ENCODE measurements at regions of chr13 and their contacts with region 1.

Region 1: GRCh38 chr13:109275852-109276251 is 510.5 kb downstream of the IRS2 start:
- DNase-seq: peak; percentile 41
- H3K4me3 Mint-ChIP-seq: no peak overlapping the region
- H3K27ac Mint-ChIP-seq: no peak overlapping the region
- H3K4me1 Mint-ChIP-seq: peaks cover 15% of the 10 kb centered on the region
- H3K27me3 Mint-ChIP-seq: no peaks in the 10 kb centered on the region
- CTCF ChIP-seq: no peak

Region 2: GRCh38 chr13:108961542-108962125 is 314.2 kb before region 1 on chr13:
- CTCF ChIA-PET with region 1: interaction called, 3 read pairs
- POLR2A ChIA-PET with region 1: interaction called, 6 read pairs
- intact Hi-C with region 1: loop called (anchors 5 kb)
- DNase-seq: peak; percentile 57
- H3K4me3 Mint-ChIP-seq: no peak overlapping the region
- H3K27ac Mint-ChIP-seq: no peak overlapping the region
- H3K4me1 Mint-ChIP-seq: peaks cover 43% of the 10 kb centered on the region
- H3K27me3 Mint-ChIP-seq: no peaks in the 10 kb centered on the region
- CTCF ChIP-seq: peak; percentile 79

Region 3: GRCh38 chr13:109087916-109088623 is 187.8 kb before region 1 on chr13:
- CTCF ChIA-PET with region 1: no interaction called
- POLR2A ChIA-PET with region 1: no interaction called
- intact Hi-C with region 1: no loop called
- DNase-seq: peak; percentile 17
- H3K4me3 Mint-ChIP-seq: no peak overlapping the region
- H3K27ac Mint-ChIP-seq: no peak overlapping the region
- H3K4me1 Mint-ChIP-seq: no peaks in the 10 kb centered on the region
- H3K27me3 Mint-ChIP-seq: no peaks in the 10 kb centered on the region
- CTCF ChIP-seq: no peak

Region 4: GRCh38 chr13:109156181-109156935 is 119.5 kb before region 1 on chr13:
- CTCF ChIA-PET with region 1: interaction called, 3 read pairs
- POLR2A ChIA-PET with region 1: interaction called, 41 read pairs
- intact Hi-C with region 1: no loop called
- DNase-seq: peak; percentile 82
- H3K4me3 Mint-ChIP-seq: peak overlapping the region; percentile 64
- H3K27ac Mint-ChIP-seq: peak overlapping the region; percentile 95
- H3K4me1 Mint-ChIP-seq: peaks cover 61% of the 10 kb centered on the region
- H3K27me3 Mint-ChIP-seq: no peaks in the 10 kb centered on the region
- CTCF ChIP-seq: no peak

Region 5: GRCh38 chr13:109383670-109384069 is 107.8 kb after region 1 on chr13:
- CTCF ChIA-PET with region 1: no interaction called
- POLR2A ChIA-PET with region 1: interaction called, 6 read pairs
- intact Hi-C with region 1: loop called (anchors 5 kb)
- DNase-seq: peak; percentile 82
- H3K4me3 Mint-ChIP-seq: no peak overlapping the region
- H3K27ac Mint-ChIP-seq: peak overlapping the region; percentile 85
- H3K4me1 Mint-ChIP-seq: peaks cover 26% of the 10 kb centered on the region
- H3K27me3 Mint-ChIP-seq: no peaks in the 10 kb centered on the region
- CTCF ChIP-seq: no peak

Region 6: DNA sequence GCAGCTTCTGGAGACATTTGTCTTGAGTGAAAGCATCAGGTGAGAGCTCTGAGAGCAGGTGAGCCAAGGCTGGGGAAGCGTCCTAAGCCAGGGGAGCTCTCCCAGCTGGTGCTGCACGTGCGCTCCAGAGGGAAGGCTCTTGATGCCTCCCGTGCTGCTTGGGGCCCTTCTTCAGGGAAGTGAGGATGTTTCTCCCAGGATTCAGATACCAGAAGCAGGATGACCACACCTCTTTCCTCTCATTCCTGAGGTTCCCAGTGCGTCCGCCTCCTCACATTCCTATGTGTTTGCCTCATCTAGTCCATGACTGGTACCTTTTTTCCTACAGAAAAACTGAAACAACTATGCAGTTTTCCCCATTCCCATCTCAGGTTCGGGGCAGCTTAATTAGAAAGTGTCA is 741.5 kb after region 1 on chr13:
- CTCF ChIA-PET with region 1: no interaction called
- POLR2A ChIA-PET with region 1: no interaction called
- intact Hi-C with region 1: loop called (anchors 10 kb)
- DNase-seq: peak; percentile 93
- H3K4me3 Mint-ChIP-seq: peak overlapping the region; percentile 30
- H3K27ac Mint-ChIP-seq: peak overlapping the region; percentile 92
- H3K4me1 Mint-ChIP-seq: peaks cover 53% of the 10 kb centered on the region
- H3K27me3 Mint-ChIP-seq: no peaks in the 10 kb centered on the region
- CTCF ChIP-seq: no peak